CD14-positive monocyte (primary cell): ENCODE measurements at regions of chr16 and their contacts with region 1.

Region 1: GRCh38 chr16:68328151-68328859 is 17.5 kb downstream of the PRMT7 start:
- DNase-seq: peak; percentile 69 to 81 (median 74)
- H3K4me3 ChIP-seq: no peak overlapping the region
- H3K4me3 Mint-ChIP-seq: no peak overlapping the region
- H3K27ac ChIP-seq: no peak overlapping the region
- H3K27ac Mint-ChIP-seq: no peak overlapping the region
- H3K4me1 ChIP-seq: peaks cover 18 to 20% of the 10 kb centered on the region in 2 donors
- H3K4me1 Mint-ChIP-seq: peaks cover 18% of the 10 kb centered on the region
- H3K27me3 ChIP-seq: no peaks in the 10 kb centered on the region
- H3K27me3 Mint-ChIP-seq: peaks cover 0 to 4% (median 0%) of the 10 kb centered on the region in 3 donors
- CTCF ChIP-seq: peak; percentile 94

Region 2: GRCh38 chr16:68166264-68166663 is 162.0 kb before region 1 on chr16:
- intact Hi-C with region 1: no loop called
- DNase-seq: no peak
- H3K4me3 ChIP-seq: no peak overlapping the region
- H3K4me3 Mint-ChIP-seq: no peak overlapping the region
- H3K27ac ChIP-seq: peak overlapping the region in 1 of 2 donors; percentile 34
- H3K27ac Mint-ChIP-seq: peak overlapping the region in 2 of 7 donors; percentile 13 to 15
- H3K4me1 ChIP-seq: no peaks in the 10 kb centered on the region
- H3K4me1 Mint-ChIP-seq: no peaks in the 10 kb centered on the region
- H3K27me3 ChIP-seq: no peaks in the 10 kb centered on the region
- H3K27me3 Mint-ChIP-seq: peaks cover 0 to 1% (median 0%) of the 10 kb centered on the region in 3 donors
- CTCF ChIP-seq: no peak

Region 3: DNA sequence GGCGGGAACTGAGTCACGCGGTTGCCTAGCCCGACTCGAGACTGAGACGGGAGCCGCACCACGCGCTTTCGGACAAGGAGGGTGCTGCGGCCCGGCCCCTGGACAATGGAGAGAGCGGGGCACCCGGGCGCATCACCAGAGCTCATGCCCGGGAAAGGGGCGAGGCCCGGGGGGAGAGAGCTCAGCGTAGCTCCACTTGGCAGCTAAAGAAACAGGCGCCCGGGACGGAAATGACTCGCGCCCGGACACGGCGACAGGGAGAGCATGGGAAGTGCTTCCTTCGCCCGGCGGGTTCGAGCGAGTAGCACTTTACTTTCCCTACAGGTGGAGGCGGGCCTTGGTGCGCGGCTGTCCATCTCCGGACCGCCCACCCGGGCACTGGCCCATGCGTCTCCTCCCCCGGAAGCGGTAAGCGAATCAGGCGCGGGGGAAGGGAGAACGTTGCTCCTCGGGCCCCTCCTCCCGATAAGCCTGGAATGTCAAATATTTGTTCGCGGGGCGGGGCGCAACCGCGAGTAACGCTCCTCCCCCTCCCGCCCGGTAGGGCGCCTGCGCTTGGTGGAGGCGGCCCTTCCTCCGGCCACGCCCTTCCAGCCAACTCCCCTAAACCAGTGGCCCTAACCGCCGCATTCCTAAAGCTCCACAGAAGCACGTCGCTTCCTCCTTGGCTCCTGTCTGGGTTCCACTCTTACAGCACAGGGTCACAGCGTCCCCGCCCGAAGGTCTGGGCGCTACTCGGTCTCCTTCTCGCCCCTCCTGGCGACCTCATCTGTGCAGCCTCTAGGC is 90.9 kb before region 1 on chr16:
- intact Hi-C with region 1: loop called (anchors 1 kb)
- DNase-seq: peak; percentile 78 to 86 (median 82)
- H3K4me3 ChIP-seq: peak overlapping the region; percentile 46 to 85 (median 70)
- H3K4me3 Mint-ChIP-seq: peak overlapping the region; percentile 97 to 99
- H3K27ac ChIP-seq: peak overlapping the region; percentile 28 to 67
- H3K27ac Mint-ChIP-seq: peak overlapping the region; percentile 78 to 91 (median 90)
- H3K4me1 ChIP-seq: peaks cover 25 to 49% of the 10 kb centered on the region in 2 donors
- H3K4me1 Mint-ChIP-seq: peaks cover 28% of the 10 kb centered on the region
- H3K27me3 ChIP-seq: peaks cover 9 to 33% of the 10 kb centered on the region in 2 donors
- H3K27me3 Mint-ChIP-seq: peaks cover 28 to 42% (median 33%) of the 10 kb centered on the region in 3 donors
- CTCF ChIP-seq: no peak

Region 4: DNA sequence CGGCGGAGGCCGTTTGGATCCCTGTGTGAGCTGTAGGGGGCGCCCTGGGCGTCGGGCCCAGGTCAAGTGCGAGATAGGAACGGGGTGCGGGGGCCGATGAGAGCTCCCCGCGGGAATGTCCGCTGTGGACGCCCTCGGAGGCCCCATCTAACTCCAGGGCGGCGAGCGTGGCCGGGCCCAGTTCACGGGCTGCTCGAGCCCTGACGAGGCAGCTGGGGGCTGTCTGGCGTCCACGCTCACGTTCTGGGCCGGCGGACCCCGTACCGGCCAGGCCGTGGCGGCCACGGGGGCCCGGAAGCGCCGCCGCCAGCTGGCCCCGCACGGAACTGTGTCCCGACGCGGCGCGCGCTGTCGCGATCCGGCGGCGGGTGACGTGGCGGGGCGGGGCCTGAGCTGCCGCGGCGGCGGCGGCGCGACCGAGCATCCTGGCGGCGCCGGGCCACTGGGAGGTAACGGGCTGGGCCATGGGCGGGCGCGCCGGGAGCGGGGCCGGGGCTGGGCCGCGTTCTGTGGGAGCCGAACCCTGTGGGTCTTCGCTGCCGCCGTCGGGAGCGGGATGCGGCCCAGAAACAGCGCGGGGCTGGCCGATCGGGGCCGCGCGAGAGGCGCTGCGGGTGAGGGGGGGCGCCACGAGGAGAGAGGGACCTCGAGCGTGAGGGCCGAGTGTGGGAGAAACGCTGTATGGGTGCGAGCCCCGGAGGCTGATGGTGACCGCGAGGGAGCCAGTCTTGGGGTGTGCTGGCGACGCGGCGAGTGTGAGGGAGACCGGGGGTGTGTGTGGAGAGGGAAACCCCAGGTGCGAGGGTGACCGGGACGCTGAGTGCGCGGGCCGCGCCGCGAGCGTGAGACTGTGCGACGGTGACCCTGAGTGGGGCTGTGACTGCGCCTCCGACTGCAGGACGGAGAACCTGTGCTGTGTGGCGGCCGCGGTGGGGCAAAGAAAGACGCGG is 63.9 kb before region 1 on chr16 and contains the start of gene SLC7A6:
- intact Hi-C with region 1: loop called (anchors 5 kb)
- DNase-seq: peak; percentile 64 to 75 (median 75)
- H3K4me3 ChIP-seq: peak within 1 kb of the TSS; percentile 73 to 83 (median 79)
- H3K4me3 Mint-ChIP-seq: peak within 1 kb of the TSS; percentile 97 to 99
- H3K27ac ChIP-seq: peak within 1 kb of the TSS; percentile 82 to 89
- H3K27ac Mint-ChIP-seq: peak within 1 kb of the TSS; percentile 88 to 96 (median 96)
- H3K4me1 ChIP-seq: peaks cover 24 to 28% of the 10 kb centered on the region in 2 donors
- H3K4me1 Mint-ChIP-seq: peaks cover 28% of the 10 kb centered on the region
- H3K27me3 ChIP-seq: no peaks in the 10 kb centered on the region
- H3K27me3 Mint-ChIP-seq: peaks cover 0 to 3% (median 0%) of the 10 kb centered on the region in 3 donors
- CTCF ChIP-seq: peak; percentile 85
- polyA plus RNA-seq, gene SLC7A6: 4.3 to 47.7 (median 5.5) TPM